ENCODE measurements at regions of chr14 and their contacts with region 1.

Region 1: GRCh38 chr14:69720912-69721311 is 46.0 kb upstream of the SRSF5 start:
- DNase-seq: no peak
- ATAC-seq: no peak
- H3K4me3 ChIP-seq: no peak overlapping the region
- H3K4me1 ChIP-seq: peaks cover 4% of the 10 kb centered on the region
- CTCF ChIP-seq: no peak

Region 2: DNA sequence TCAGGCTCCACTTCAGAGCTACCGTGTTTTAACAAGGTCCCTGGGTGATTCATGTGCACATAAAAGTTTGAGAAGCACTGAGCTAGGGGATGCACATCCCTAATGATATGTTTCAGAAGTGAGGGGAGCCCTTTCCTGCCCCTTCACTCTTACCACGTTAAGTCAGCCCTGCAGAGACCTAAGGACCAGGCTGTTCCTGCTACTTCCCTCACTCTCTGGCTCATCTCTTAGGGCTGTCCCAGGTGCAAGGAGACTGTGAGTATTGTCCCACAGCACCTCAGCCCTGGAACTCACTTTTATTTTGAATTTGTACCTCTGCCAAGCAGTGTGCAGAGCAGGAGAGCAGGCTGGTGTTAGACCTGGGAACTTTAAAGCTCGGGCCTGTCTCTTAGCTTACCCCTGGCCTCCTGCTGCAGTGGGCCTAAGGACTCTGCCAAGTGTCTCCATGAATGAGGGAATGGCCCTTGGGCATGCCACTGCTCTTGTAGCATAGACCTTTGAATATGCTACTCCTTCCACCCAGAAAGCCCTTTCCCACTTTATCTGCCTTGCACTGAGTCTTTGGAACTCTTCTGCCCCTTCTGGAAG is 120.5 kb before region 1 on chr14:
- intact Hi-C with region 1: loop called (anchors 5 kb)
- DNase-seq: no peak
- ATAC-seq: no peak
- H3K4me3 ChIP-seq: no peak overlapping the region
- H3K4me1 ChIP-seq: peaks cover 6% of the 10 kb centered on the region
- CTCF ChIP-seq: no peak

Region 3: DNA sequence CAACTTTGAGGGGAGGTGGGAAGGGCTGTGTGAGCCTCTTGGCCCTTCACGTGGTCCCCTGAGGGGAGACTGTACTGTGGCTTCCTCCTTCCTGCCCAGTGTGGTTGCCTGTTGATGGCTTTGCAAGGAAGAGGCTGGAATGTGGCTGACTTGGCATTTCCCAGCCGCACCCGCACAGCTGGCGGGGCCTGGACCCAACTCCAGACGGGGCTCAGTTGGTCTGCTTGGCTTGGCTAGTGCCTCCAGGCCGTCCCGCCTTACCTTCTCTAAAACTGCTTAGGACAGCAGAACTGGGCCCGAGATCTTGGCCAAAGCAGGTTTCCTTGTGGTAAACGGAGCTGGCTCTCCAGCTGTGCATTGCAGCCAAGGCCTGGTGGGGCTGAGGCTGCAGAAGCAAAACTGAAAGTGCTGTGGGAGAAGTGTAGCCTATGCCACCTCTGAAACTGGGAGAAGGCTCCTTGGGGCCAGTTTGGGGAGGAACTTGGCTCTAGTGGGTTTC is 297.9 kb after region 1 on chr14:
- intact Hi-C with region 1: no loop called
- DNase-seq: peak in 2 of 3 donors; percentile 38 to 43
- ATAC-seq: peak; percentile 76
- H3K4me3 ChIP-seq: no peak overlapping the region
- H3K4me1 ChIP-seq: no peaks in the 10 kb centered on the region
- CTCF ChIP-seq: no peak

Measured in mucosa of descending colon (tissue), 3 donors.